ENCODE measurements at regions of chr12 and their contacts with region 1.

Region 1: DNA sequence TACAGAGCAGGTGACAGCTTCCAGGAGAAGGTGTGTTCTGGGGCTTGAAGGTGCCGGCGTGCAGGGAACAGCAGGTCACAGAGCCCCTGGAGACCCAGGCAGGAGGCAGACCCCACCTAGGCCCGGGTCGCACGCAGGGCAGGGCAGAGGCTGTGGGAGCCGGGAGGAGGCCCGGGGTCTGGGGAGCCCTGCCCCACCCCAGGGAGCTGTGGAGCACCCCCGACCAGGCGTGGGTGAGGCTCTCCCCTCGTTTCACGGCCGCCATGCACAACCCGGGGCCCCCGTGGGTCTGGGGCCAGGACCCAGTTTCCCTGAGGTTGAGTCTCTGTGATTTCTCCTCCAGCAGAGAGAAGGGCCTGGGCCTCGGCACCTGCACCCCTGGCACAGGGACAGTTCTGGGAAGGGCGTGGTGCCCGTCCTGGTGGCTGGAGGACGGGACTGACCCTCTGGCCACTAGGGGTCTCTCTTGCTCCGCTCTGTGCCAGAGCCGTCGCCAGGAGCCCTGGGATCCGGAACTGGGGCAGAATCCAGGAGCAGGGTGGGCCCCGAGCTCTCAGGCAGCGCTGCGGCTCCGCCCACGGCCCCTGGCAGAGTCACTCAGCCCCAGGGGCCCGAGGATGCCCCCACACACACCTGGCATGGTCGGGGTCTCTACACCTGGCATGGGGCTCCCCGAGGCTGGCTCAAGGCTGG is 75.2 kb upstream of the FBRSL1 start:
- DNase-seq: peak; percentile 83
- ATAC-seq: peak; percentile 98

Region 2: DNA sequence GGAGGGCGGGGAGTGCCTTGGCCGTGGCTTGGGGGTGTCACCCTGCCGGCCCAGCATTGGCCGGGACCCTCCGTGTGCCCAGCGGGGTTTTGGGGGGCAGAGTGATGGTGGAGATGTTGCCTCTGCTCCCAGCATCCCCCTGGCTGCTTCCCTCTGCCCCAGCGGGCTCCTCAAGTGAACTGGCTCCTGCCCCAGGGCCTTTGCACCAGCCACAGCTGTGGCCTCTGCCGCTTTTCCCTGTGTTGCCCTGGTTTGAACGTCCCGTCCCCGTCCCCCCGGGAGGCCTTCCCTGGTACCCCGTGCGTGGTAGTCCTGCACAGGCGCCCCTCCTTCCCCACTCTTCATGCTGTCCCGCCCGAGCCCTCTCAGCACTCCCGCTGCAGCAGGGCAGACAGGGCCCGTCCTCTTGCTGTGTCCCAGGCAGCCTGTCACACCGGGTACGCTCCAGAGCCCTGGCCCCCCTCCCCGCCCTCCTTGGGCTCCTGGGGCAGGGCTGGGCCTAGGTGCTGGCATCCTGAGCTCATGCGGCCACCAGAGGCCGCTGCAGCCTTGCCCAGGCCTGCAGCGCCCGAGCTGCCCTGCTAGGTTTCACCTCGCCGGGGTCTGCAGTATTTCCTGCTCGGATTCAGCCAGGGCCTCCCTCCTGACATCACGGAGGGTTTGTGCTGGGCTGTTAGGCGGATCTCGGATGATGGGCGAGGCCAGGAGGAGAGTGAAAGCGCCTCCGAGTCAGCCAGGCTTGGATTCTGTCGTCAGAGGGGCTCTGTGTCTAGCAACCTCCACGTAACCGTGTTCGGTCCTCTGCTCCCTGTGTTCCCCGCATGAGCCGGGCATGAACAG is 261.1 kb before region 1 on chr12:
- intact Hi-C with region 1: loop called (anchors 10 kb)
- DNase-seq: peak; percentile 82
- ATAC-seq: peak; percentile 95

Region 3: DNA sequence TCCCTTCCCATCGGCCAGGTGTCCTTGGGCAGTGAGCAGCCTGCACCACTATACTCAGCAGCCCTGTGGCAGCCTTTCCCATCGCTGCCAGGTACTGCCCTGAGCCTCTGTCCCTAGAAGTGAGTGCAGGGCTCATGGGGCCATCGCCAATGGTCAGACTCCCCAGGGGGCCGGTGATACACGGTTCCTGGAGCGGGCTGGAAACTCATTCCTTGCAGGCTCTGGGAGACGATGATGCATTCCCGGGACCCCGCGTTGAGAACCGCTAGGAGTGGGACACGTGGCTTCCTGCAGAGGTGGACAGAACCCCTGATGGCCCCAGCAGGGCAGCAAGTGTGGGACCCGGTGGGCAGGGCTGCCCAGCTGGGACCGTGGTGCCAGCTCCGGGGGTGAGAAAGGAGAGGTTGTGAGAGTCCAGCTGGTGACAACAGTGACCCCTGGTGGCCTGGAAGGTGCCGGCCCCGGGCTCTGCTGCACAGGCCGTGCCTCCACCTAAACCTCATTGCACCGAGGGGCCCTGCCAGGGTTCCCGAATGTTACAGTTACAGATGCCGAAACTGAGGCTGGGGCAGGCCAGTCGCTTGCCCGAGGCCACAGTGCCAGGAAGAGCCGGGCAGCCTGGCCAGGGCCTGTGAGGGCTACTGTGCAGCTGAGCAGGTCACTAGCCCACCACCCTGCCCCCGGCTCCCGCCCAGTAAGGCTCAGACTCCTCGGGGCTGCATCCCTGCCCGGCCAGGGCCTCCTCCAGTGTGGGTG is 109.0 kb after region 1 on chr12:
- intact Hi-C with region 1: loop called (anchors 2 kb)
- DNase-seq: peak; percentile 84
- ATAC-seq: peak; percentile 75

Region 4: GRCh38 chr12:132614861-132615578 is 200.2 kb after region 1 on chr12:
- intact Hi-C with region 1: loop called (anchors 2 kb)
- DNase-seq: peak; percentile 87
- ATAC-seq: peak; percentile 96

Measured in Right ventricle myocardium superior (tissue), 1 donor.